Kidney (tissue), 22 donors: ENCODE measurements at regions of chr19 and their contacts with region 1.

Region 1: GRCh38 chr19:3471954-3472655 is 8.2 kb downstream of the SMIM24 start:
- DNase-seq: peak in 2 of 5 donors; percentile 40 to 65
- H3K4me3 ChIP-seq: no peak overlapping the region
- H3K27ac ChIP-seq: no peak overlapping the region
- H3K4me1 ChIP-seq: peaks cover 0 to 17% (median 9%) of the 10 kb centered on the region in 3 donors
- H3K27me3 ChIP-seq: no peaks in the 10 kb centered on the region
- CTCF ChIP-seq: peak; percentile 62

Region 2: GRCh38 chr19:3324321-3324856 is 147.7 kb before region 1 on chr19:
- intact Hi-C with region 1: loop called (anchors 10 kb)
- DNase-seq: peak in 1 of 5 donors; percentile 66
- H3K4me3 ChIP-seq: no peak overlapping the region
- H3K27ac ChIP-seq: no peak overlapping the region
- H3K4me1 ChIP-seq: no peaks in the 10 kb centered on the region
- H3K27me3 ChIP-seq: no peaks in the 10 kb centered on the region
- CTCF ChIP-seq: peak; percentile 60

Region 3: GRCh38 chr19:3360421-3361383 is 111.4 kb before region 1 on chr19:
- intact Hi-C with region 1: no loop called
- DNase-seq: peak in 4 of 5 donors; percentile 43 to 92 (median 72)
- H3K4me3 ChIP-seq: peak overlapping the region; percentile 45 to 78 (median 71)
- H3K27ac ChIP-seq: peak overlapping the region; percentile 89 to 97
- H3K4me1 ChIP-seq: peaks cover 0 to 25% (median 19%) of the 10 kb centered on the region in 3 donors
- H3K27me3 ChIP-seq: no peaks in the 10 kb centered on the region
- CTCF ChIP-seq: no peak

Region 4: DNA sequence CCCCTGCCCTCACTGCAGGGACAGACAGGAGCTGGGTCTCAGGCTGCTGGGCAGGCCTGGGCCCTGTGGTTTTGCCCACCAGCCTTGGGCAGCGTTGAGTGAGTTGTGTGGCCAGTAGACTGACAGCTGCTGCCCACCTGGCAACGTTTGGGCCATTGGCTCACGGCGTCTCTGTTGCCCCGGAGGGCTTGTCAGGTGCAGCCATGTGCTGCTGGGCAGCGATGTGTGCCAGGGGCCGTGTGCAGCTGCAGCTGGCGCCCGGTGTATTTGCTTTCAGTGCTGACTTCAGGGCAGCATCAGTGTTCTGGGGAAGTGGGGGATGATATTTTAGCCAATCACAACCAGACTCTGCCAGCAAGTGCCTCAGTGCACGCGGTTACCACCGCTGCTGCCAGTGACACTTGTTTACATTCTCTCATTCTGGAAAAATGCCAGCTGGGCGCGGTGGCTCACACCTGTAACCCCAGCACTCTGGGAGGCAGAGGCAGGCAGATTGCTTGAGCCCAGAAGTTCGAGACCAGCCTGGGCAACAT is 44.6 kb after region 1 on chr19:
- intact Hi-C with region 1: no loop called
- DNase-seq: peak in 4 of 5 donors; percentile 58 to 70 (median 67)
- H3K4me3 ChIP-seq: no peak overlapping the region
- H3K27ac ChIP-seq: no peak overlapping the region
- H3K4me1 ChIP-seq: peaks cover 0 to 13% (median 7%) of the 10 kb centered on the region in 3 donors
- H3K27me3 ChIP-seq: no peaks in the 10 kb centered on the region
- CTCF ChIP-seq: no peak

Region 5: GRCh38 chr19:3893509-3894179 is 421.5 kb after region 1 on chr19:
- intact Hi-C with region 1: no loop called
- DNase-seq: peak in 1 of 5 donors; percentile 18
- H3K4me3 ChIP-seq: no peak overlapping the region
- H3K27ac ChIP-seq: no peak overlapping the region
- H3K4me1 ChIP-seq: no peaks in the 10 kb centered on the region
- H3K27me3 ChIP-seq: no peaks in the 10 kb centered on the region
- CTCF ChIP-seq: no peak